B cell (primary cell): ENCODE measurements at regions of chr5 and their contacts with region 1.

Region 1: GRCh38 chr5:149680810-149681221 is 49.3 kb upstream of the PPARGC1B start:
- DNase-seq: peak; percentile 88
- ATAC-seq: peak; percentile 96
- H3K4me3 ChIP-seq: no peak overlapping the region
- H3K4me3 Mint-ChIP-seq: peak overlapping the region; percentile 53
- H3K27ac ChIP-seq: peak overlapping the region; percentile 49 to 56
- H3K27ac Mint-ChIP-seq: peak overlapping the region; percentile 80
- H3K4me1 ChIP-seq: peaks cover 38 to 43% of the 10 kb centered on the region in 2 donors
- H3K4me1 Mint-ChIP-seq: peaks cover 53% of the 10 kb centered on the region
- H3K27me3 ChIP-seq: peaks cover 0 to 4% (median 0%) of the 10 kb centered on the region in 4 experiments
- H3K27me3 Mint-ChIP-seq: no peaks in the 10 kb centered on the region
- CTCF ChIP-seq: no peak

Region 2: DNA sequence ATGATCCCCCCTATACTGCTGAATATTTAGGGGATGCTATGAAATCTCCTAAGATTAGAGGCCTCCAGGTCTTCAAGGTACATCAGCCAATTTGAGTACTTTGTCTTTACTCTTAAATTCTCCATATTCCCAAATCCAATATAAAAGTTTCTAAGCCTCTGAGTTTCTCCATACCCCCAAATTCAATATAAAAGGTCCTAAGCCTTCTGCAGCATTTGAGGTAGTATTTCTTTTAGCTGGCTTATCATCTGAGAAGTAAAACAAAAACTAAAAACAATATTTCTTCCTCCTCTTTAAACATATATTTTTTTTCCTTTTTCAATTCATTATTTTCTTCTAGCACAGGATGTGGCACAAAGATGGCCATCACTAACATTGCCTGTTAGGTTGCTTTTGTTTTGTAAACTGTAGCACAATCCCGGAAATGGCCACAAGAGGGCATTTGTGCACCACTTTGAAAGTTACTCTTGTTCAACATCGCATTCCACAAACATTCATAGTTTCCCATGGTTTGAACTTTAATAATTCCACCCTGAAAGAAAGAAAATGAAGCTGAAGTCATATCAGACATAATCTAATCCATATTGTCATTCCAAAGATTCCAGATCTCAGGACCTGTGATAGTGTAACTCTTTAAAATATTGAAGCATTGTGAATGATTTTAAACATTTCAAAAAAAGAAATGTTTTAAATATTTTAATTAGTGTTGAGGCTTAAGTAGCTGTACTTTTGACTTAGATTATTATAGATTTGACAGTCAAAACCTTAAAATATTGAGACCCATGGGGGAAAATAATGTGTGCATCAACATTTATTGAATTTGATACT is 1823.3 kb before region 1 on chr5:
- CTCF ChIA-PET with region 1: no interaction called
- POLR2A ChIA-PET with region 1: no interaction called
- intact Hi-C with region 1: no loop called
- DNase-seq: peak; percentile 27
- ATAC-seq: no peak
- H3K4me3 ChIP-seq: no peak overlapping the region
- H3K4me3 Mint-ChIP-seq: no peak overlapping the region
- H3K27ac ChIP-seq: no peak overlapping the region
- H3K27ac Mint-ChIP-seq: no peak overlapping the region
- H3K4me1 ChIP-seq: no peaks in the 10 kb centered on the region
- H3K4me1 Mint-ChIP-seq: no peaks in the 10 kb centered on the region
- H3K27me3 ChIP-seq: no peaks in the 10 kb centered on the region
- H3K27me3 Mint-ChIP-seq: peaks cover 23% of the 10 kb centered on the region
- CTCF ChIP-seq: peak; percentile 88

Region 3: DNA sequence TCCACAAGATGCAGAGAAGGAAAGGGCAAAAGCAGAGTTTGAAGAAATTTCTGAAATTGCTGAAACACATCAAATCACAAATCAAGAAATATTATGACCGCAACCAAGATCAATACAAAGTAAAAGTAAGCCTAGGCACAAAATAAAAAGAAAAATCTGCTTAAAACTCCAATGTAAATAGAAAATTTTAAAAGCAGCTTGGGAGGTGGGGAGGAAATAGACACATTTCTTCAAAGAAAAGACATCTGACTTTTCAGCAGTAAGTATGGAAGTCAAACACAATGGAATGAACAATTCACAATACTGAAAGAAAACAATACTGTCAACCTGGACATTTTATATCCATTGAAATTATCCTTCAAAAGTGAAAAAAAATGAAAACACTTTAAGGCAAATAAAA is 1081.6 kb before region 1 on chr5:
- CTCF ChIA-PET with region 1: no interaction called
- POLR2A ChIA-PET with region 1: no interaction called
- intact Hi-C with region 1: no loop called
- DNase-seq: no peak
- ATAC-seq: no peak
- H3K4me3 ChIP-seq: no peak overlapping the region
- H3K4me3 Mint-ChIP-seq: no peak overlapping the region
- H3K27ac ChIP-seq: no peak overlapping the region
- H3K27ac Mint-ChIP-seq: no peak overlapping the region
- H3K4me1 ChIP-seq: no peaks in the 10 kb centered on the region
- H3K4me1 Mint-ChIP-seq: no peaks in the 10 kb centered on the region
- H3K27me3 ChIP-seq: no peaks in the 10 kb centered on the region
- H3K27me3 Mint-ChIP-seq: peaks cover 15% of the 10 kb centered on the region
- CTCF ChIP-seq: no peak

Region 4: DNA sequence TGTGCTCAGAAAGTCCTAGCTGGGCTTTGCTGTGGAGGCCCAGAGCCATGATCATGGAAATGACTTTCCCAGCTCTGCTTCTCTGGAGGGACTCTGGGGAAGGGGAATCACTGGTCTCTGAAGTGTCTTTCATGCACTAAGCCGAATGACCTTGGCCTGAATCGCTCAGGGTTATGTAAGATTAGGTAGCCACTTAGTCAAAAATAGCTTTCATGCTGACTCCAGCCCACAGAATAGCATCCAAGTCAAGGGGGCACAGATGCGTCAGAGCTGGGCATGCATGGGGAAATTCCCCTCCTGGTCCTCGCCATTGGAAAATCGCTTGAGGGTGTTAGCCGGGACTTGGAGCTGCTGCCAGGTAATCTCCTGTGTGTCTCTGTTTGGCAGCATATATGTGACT is 13.2 kb after region 1 on chr5:
- CTCF ChIA-PET with region 1: no interaction called
- POLR2A ChIA-PET with region 1: no interaction called
- intact Hi-C with region 1: loop called (anchors 2 kb)
- DNase-seq: no peak
- ATAC-seq: no peak
- H3K4me3 ChIP-seq: no peak overlapping the region
- H3K4me3 Mint-ChIP-seq: no peak overlapping the region
- H3K27ac ChIP-seq: no peak overlapping the region
- H3K27ac Mint-ChIP-seq: no peak overlapping the region
- H3K4me1 ChIP-seq: no peaks in the 10 kb centered on the region
- H3K4me1 Mint-ChIP-seq: no peaks in the 10 kb centered on the region
- H3K27me3 ChIP-seq: peaks cover 0 to 12% (median 2%) of the 10 kb centered on the region in 4 experiments
- H3K27me3 Mint-ChIP-seq: peaks cover 40% of the 10 kb centered on the region
- CTCF ChIP-seq: no peak

Region 5: DNA sequence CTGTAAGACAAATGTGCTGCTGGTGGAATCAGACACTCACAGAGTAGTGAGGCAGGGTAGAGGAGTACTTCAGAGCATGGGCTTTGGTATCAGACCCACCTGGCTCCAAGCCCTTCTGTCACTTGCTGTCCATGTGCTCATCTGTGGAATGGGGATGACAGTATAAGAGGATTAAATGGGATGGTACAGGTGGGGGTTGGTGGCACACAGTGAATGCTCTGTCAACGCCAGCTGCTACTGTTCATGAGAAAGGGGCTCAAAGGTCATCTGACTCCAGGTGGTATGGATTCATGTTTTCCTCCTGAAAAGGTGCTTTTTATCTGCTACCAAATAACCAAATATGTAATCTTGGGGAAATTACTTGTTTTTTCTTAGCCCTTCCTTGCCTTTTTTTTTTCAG is 26.3 kb after region 1 on chr5:
- CTCF ChIA-PET with region 1: no interaction called
- POLR2A ChIA-PET with region 1: no interaction called
- intact Hi-C with region 1: no loop called
- DNase-seq: no peak
- ATAC-seq: no peak
- H3K4me3 ChIP-seq: no peak overlapping the region
- H3K4me3 Mint-ChIP-seq: no peak overlapping the region
- H3K27ac ChIP-seq: no peak overlapping the region
- H3K27ac Mint-ChIP-seq: no peak overlapping the region
- H3K4me1 ChIP-seq: no peaks in the 10 kb centered on the region
- H3K4me1 Mint-ChIP-seq: no peaks in the 10 kb centered on the region
- H3K27me3 ChIP-seq: peaks cover 0 to 16% (median 9%) of the 10 kb centered on the region in 4 experiments
- H3K27me3 Mint-ChIP-seq: peaks cover 32% of the 10 kb centered on the region
- CTCF ChIP-seq: no peak

Region 6: GRCh38 chr5:149775785-149776184 is 95.0 kb after region 1 on chr5:
- CTCF ChIA-PET with region 1: interaction called, 3 read pairs
- POLR2A ChIA-PET with region 1: no interaction called
- intact Hi-C with region 1: loop called (anchors 1 kb)
- DNase-seq: no peak
- ATAC-seq: no peak
- H3K4me3 ChIP-seq: no peak overlapping the region
- H3K4me3 Mint-ChIP-seq: no peak overlapping the region
- H3K27ac ChIP-seq: no peak overlapping the region
- H3K27ac Mint-ChIP-seq: no peak overlapping the region
- H3K4me1 ChIP-seq: peaks cover 44 to 49% of the 10 kb centered on the region in 2 donors
- H3K4me1 Mint-ChIP-seq: peaks cover 57% of the 10 kb centered on the region
- H3K27me3 ChIP-seq: no peaks in the 10 kb centered on the region
- H3K27me3 Mint-ChIP-seq: no peaks in the 10 kb centered on the region
- CTCF ChIP-seq: peak; percentile 56